Endothelial cell of umbilical vein (primary cell): ENCODE measurements at regions of chr2 and their contacts with region 1.

Region 1: DNA sequence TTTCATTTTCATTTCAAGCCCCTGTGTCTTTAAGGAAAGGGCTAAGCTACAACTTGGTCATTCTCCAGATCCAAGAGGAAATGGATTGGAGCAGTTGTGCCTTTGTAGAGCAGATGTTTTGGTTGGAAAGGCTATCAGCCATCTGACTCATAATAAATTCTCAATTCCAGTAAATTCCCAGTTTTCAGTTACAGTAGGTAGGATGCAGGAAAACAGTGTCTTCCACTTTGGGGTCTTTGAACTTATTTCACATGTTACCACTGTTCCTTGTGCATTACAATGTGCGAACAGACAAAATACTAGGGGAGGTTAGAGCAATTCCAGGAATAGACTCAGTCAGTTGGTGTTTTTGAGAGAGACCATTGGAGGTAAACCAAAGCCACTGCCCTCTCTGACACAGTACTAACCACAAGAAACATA is 211.9 kb downstream of the BABAM2 start:
- DNase-seq: peak; percentile 91
- H3K4me3 ChIP-seq: peak overlapping the region in 1 of 3 experiments; percentile 29
- H3K27ac ChIP-seq: peak overlapping the region; percentile 63
- H3K4me1 ChIP-seq: peaks cover 23% of the 10 kb centered on the region
- H3K27me3 ChIP-seq: no peaks in the 10 kb centered on the region
- CTCF ChIP-seq: no peak
- POLR2A ChIP-seq: peak; percentile 48

Region 2: DNA sequence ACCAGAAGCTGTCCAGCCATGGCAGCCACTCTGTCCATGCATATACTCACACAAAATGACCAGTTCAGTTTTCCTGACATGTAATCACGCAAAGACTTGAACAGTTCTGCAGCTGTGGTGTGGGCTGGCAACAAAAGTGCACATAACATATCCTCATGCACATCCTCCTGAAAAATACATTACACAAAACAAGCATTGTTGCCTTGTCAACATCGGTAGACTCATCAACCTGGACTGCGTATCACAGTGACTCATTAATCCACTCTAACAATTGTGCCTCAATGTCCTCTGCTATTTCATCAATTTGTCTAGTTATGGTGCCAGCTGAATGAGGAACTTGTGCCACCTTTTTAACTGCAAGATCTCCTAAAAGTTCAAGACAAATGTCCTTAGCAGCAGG is 231.7 kb before region 1 on chr2:
- CTCF ChIA-PET with region 1: no interaction called
- POLR2A ChIA-PET with region 1: no interaction called
- dilution Hi-C with region 1: no loop called
- intact Hi-C with region 1: no loop called
- DNase-seq: no peak
- H3K4me3 ChIP-seq: no peak overlapping the region
- H3K27ac ChIP-seq: no peak overlapping the region
- H3K4me1 ChIP-seq: peaks cover 3% of the 10 kb centered on the region
- H3K27me3 ChIP-seq: no peaks in the 10 kb centered on the region
- CTCF ChIP-seq: no peak
- POLR2A ChIP-seq: no peak

Region 3: GRCh38 chr2:27903649-27904404 is 198.6 kb before region 1 on chr2:
- CTCF ChIA-PET with region 1: no interaction called
- POLR2A ChIA-PET with region 1: no interaction called
- dilution Hi-C with region 1: no loop called
- intact Hi-C with region 1: no loop called
- DNase-seq: peak; percentile 63
- H3K4me3 ChIP-seq: no peak overlapping the region
- H3K27ac ChIP-seq: no peak overlapping the region
- H3K4me1 ChIP-seq: peaks cover 4% of the 10 kb centered on the region
- H3K27me3 ChIP-seq: no peaks in the 10 kb centered on the region
- CTCF ChIP-seq: no peak
- POLR2A ChIP-seq: no peak

Region 4: DNA sequence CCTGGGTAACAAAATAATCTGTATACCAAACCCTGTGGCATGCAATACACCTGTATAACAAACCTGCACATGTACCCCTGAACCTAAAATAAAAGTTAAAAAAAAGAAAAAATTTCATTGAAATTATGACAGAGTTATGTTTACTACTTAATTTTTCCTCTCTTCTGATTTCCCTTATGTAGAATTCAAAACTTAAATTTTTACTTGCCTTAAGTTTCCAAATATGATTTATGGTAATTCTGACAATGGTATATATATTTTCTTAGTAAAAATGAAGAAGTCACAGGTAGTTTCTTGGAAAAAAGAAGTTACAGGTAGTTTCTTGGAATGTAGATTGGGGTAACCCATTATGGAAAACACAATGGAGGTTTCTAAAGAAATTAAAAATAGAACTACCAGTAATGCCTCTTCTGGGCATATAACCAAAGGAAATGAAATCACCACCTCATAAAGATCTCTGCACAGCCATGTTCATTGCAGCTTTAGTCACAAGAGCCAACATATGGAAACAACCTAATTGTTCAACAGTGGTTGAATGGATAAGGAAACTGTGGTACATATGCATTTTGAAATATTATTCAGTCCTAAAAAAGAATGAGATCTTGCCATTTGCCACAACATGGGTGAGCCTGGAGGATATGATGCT is 47.0 kb before region 1 on chr2:
- CTCF ChIA-PET with region 1: interaction called, 4 read pairs
- POLR2A ChIA-PET with region 1: no interaction called
- dilution Hi-C with region 1: no loop called
- intact Hi-C with region 1: loop called (anchors 1 kb)
- DNase-seq: peak; percentile 47
- H3K4me3 ChIP-seq: no peak overlapping the region
- H3K27ac ChIP-seq: no peak overlapping the region
- H3K4me1 ChIP-seq: peaks cover 21% of the 10 kb centered on the region
- H3K27me3 ChIP-seq: no peaks in the 10 kb centered on the region
- CTCF ChIP-seq: no peak
- POLR2A ChIP-seq: no peak